Adrenal gland (tissue), 19 donors: ENCODE measurements at regions of chr10 and their contacts with region 1.

Region 1: GRCh38 chr10:23067939-23068775 is 27.2 kb upstream of the MSRB2 start:
- DNase-seq: peak; percentile 59 to 88 (median 81)
- H3K4me3 ChIP-seq: no peak overlapping the region
- H3K27ac ChIP-seq: no peak overlapping the region
- H3K4me1 ChIP-seq: no peaks in the 10 kb centered on the region
- H3K27me3 ChIP-seq: no peaks in the 10 kb centered on the region
- CTCF ChIP-seq: peak; percentile 47 to 86 (median 66)
- POLR2A ChIP-seq: no peak

Region 2: DNA sequence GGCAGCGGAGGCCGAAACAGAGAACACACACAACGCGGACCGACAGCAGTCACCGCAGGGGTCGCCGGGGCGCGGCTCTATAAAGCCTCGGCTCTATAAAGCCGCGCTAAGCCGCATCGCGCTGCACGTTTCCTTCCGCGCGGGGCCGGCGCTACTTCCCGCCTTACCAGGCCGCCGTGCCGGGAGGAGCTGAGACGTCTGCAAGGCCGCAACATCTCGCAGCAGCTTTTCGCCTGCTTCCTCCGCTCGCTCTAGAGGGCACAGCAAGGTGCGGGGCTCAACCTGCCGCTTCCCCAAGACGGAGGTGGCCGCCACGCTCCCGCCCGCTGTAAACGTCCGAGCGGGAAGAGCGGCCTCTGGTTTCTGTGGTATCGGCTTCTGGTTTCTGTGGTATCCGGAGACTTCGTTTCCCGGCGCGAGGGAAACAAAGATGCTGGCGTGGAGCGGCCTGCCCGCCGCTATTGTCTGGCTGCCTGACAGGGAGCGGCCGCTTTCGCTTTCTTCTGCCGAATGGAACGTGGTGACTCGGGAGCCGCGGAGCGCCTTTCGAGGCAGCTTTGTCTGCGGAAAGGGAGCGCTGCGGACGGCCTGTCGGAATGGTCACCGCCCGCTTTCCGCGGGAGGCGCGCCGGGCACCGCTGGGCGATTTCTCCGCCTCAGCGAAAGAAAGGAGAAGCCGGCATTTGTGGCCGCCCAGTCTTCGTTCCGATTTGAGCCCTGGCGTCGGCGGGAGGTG is 631.1 kb before region 1 on chr10:
- intact Hi-C with region 1: loop called in 1 of 2 experiments (anchors 10 kb)
- DNase-seq: peak; percentile 83 to 95 (median 86)
- H3K4me3 ChIP-seq: peak overlapping the region; percentile 31 to 79 (median 67)
- H3K27ac ChIP-seq: peak overlapping the region; percentile 89 to 98 (median 90)
- H3K4me1 ChIP-seq: peaks cover 11 to 13% of the 10 kb centered on the region in 2 donors
- H3K27me3 ChIP-seq: no peaks in the 10 kb centered on the region
- CTCF ChIP-seq: peak in 1 of 6 experiments; percentile 9
- POLR2A ChIP-seq: peak; percentile 86 to 92